Naive thymus-derived CD4-positive, alpha-beta T cell (primary cell): ENCODE measurements at regions of chr10 and their contacts with region 1.

Region 1: DNA sequence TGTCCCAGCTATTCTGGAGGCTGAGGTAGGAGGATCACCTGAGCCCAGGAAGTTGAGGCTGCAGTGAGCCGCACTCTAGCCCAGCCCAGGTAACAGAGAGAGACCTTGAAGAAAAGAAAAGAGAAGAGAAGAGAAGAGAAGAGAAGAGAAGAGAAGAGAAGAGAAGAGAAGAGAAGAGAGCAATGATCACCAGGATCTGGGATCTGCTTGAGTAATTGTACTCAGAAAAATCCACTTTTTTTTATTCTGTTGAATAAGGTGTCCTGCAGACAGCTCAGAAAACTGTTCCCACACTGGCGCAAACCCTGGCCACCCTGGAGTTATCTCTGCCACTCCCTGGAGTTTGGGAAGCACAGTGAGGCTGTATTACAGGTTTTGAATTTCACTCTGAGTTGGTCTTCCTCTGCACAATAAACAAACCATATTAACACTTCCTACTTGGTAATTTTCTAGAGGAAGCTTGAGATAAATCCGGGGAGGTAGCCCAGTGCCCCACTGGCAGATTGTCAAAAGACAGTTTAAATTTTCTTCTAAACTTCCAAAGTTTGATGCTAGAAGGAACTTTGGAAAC is 9.6 kb upstream of the OAT start:
- DNase-seq: no peak
- ATAC-seq: no peak
- H3K4me3 ChIP-seq: no peak overlapping the region
- H3K4me3 Mint-ChIP-seq: no peak overlapping the region
- H3K27ac ChIP-seq: no peak overlapping the region
- H3K27ac Mint-ChIP-seq: no peak overlapping the region
- H3K4me1 ChIP-seq: no peaks in the 10 kb centered on the region
- H3K4me1 Mint-ChIP-seq: no peaks in the 10 kb centered on the region
- H3K27me3 ChIP-seq: no peaks in the 10 kb centered on the region
- H3K27me3 Mint-ChIP-seq: peaks cover 5 to 29% (median 7%) of the 10 kb centered on the region in 5 donors

Region 2: GRCh38 chr10:125770844-125771243 is 1342.6 kb after region 1 on chr10:
- CTCF ChIA-PET with region 1: interaction called, 10 read pairs
- POLR2A ChIA-PET with region 1: no interaction called
- intact Hi-C with region 1: no loop called
- DNase-seq: no peak
- ATAC-seq: no peak
- H3K4me3 ChIP-seq: no peak overlapping the region
- H3K4me3 Mint-ChIP-seq: no peak overlapping the region
- H3K27ac ChIP-seq: no peak overlapping the region
- H3K27ac Mint-ChIP-seq: peak overlapping the region in 1 of 9 donors; percentile 42
- H3K4me1 ChIP-seq: no peaks in the 10 kb centered on the region
- H3K4me1 Mint-ChIP-seq: peaks cover 0 to 6% (median 0%) of the 10 kb centered on the region in 7 donors
- H3K27me3 ChIP-seq: no peaks in the 10 kb centered on the region
- H3K27me3 Mint-ChIP-seq: peaks cover 0 to 6% (median 4%) of the 10 kb centered on the region in 5 donors